ENCODE measurements at regions of chr1 and their contacts with region 1.

Region 1: GRCh38 chr1:161486806-161487741 is 18.2 kb upstream of the FCGR2A start:
- DNase-seq: peak in 7 of 9 donors; percentile 39 to 70 (median 59)
- ATAC-seq: peak; percentile 79
- H3K4me3 ChIP-seq: no peak overlapping the region
- H3K4me3 Mint-ChIP-seq: no peak overlapping the region
- H3K27ac ChIP-seq: no peak overlapping the region
- H3K27ac Mint-ChIP-seq: peak overlapping the region in 1 of 9 donors; percentile 32
- H3K4me1 ChIP-seq: no peaks in the 10 kb centered on the region
- H3K4me1 Mint-ChIP-seq: peaks cover 7 to 20% (median 15%) of the 10 kb centered on the region in 7 donors
- H3K27me3 ChIP-seq: no peaks in the 10 kb centered on the region
- H3K27me3 Mint-ChIP-seq: peaks cover 29 to 51% (median 37%) of the 10 kb centered on the region in 5 donors

Region 2: DNA sequence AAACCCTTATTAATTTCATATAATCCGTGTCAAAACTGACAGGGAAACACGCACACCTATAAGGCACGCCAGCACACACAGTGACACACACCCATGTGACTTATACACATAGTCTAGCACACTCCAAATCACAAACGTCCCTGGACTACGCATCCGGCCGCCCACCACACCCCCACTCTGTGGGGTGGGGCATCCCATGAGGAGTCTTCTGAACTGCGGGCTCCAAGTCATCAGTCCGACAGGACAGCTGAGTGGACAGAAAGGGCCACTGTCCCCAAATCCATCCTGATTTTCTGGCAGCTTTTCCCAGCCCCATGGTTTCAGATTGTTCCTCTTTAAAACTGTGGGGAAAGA is 1281.1 kb before region 1 on chr1:
- CTCF ChIA-PET with region 1: no interaction called
- POLR2A ChIA-PET with region 1: no interaction called
- intact Hi-C with region 1: no loop called
- DNase-seq: peak in 6 of 9 donors; percentile 22 to 58 (median 40)
- ATAC-seq: peak; percentile 61
- H3K4me3 ChIP-seq: peak overlapping the region; percentile 77
- H3K4me3 Mint-ChIP-seq: peak overlapping the region; percentile 77 to 94 (median 86)
- H3K27ac ChIP-seq: peak overlapping the region; percentile 74
- H3K27ac Mint-ChIP-seq: peak overlapping the region; percentile 58 to 88 (median 82)
- H3K4me1 ChIP-seq: peaks cover 12 to 16% of the 10 kb centered on the region in 2 donors
- H3K4me1 Mint-ChIP-seq: peaks cover 31 to 50% (median 37%) of the 10 kb centered on the region in 7 donors
- H3K27me3 ChIP-seq: no peaks in the 10 kb centered on the region
- H3K27me3 Mint-ChIP-seq: no peaks in the 10 kb centered on the region

Region 3: DNA sequence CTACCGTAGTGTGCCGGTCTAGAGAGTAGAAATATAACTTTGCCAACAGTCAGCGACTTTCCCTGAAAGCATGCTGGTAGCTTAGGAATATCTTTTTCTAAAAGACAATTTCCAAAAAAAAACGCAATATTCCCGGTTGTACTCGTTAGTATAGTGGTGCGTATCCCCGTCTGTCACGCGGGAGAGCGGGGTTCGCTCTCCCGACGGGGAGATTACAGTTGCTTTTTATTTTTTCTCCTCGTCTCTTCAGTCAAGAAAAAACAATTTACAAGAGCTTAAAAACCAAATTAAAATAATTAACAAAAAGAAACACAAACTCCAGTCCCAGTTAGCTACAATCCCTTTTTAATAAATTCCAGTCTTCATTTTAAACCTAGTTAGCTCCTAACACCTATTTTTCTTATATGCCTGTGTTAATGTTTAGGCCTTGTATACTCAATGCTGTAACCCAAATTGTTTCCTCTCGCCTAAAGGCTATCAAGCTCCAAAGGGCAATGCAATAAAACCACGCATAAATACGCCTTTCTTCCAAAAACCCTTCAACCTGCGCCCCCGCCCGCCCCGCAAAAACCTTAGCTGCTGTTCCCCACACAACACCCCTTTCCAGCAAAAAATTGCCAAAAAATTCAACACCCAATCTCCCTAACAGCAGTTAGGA is 45.0 kb after region 1 on chr1:
- CTCF ChIA-PET with region 1: no interaction called
- POLR2A ChIA-PET with region 1: no interaction called
- intact Hi-C with region 1: loop called in 1 of 2 experiments (anchors 2 kb)
- DNase-seq: no peak
- ATAC-seq: no peak
- H3K4me3 ChIP-seq: no peak overlapping the region
- H3K4me3 Mint-ChIP-seq: peak overlapping the region in 9 of 10 donors; percentile 25 to 59 (median 50)
- H3K27ac ChIP-seq: no peak overlapping the region
- H3K27ac Mint-ChIP-seq: peak overlapping the region in 6 of 9 donors; percentile 10 to 80 (median 66)
- H3K4me1 ChIP-seq: peaks cover 10 to 11% of the 10 kb centered on the region in 2 donors
- H3K4me1 Mint-ChIP-seq: peaks cover 0 to 23% (median 19%) of the 10 kb centered on the region in 7 donors
- H3K27me3 ChIP-seq: no peaks in the 10 kb centered on the region
- H3K27me3 Mint-ChIP-seq: peaks cover 0 to 34% (median 0%) of the 10 kb centered on the region in 5 donors

Region 4: GRCh38 chr1:161738627-161739287 is 251.7 kb after region 1 on chr1:
- CTCF ChIA-PET with region 1: interaction called, 18 read pairs
- POLR2A ChIA-PET with region 1: no interaction called
- intact Hi-C with region 1: loop called (anchors 1 kb)
- DNase-seq: peak in 8 of 9 donors; percentile 17 to 55 (median 47)
- ATAC-seq: peak; percentile 83
- H3K4me3 ChIP-seq: no peak overlapping the region
- H3K4me3 Mint-ChIP-seq: peak overlapping the region in 1 of 10 donors; percentile 28
- H3K27ac ChIP-seq: no peak overlapping the region
- H3K27ac Mint-ChIP-seq: peak overlapping the region in 1 of 9 donors; percentile 74
- H3K4me1 ChIP-seq: peaks cover 4 to 25% of the 10 kb centered on the region in 2 donors
- H3K4me1 Mint-ChIP-seq: peaks cover 0 to 42% (median 18%) of the 10 kb centered on the region in 7 donors
- H3K27me3 ChIP-seq: no peaks in the 10 kb centered on the region
- H3K27me3 Mint-ChIP-seq: peaks cover 0 to 36% (median 5%) of the 10 kb centered on the region in 5 donors

Region 5: DNA sequence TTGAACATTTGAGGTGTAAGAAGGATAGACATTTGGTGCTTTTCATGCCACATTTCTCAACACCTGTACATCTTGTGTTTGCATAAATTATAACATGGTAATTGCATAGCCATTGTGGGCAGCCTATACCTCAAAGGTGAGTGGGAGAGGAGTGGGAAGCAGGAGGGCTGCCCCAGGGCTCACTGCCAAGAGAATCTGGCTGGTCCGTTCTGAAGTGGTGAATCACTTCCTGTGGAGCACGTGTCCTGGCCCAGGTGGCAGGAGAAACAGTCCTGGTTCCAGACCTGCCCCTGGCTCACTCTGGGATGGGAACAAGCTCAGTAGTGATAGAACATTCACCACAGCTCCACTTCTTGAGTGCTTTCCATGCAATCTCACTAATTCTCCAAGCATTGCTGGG is 548.2 kb after region 1 on chr1:
- CTCF ChIA-PET with region 1: no interaction called
- POLR2A ChIA-PET with region 1: no interaction called
- intact Hi-C with region 1: loop called (anchors 1 to 10 kb)
- DNase-seq: no peak
- ATAC-seq: no peak
- H3K4me3 ChIP-seq: no peak overlapping the region
- H3K4me3 Mint-ChIP-seq: no peak overlapping the region
- H3K27ac ChIP-seq: no peak overlapping the region
- H3K27ac Mint-ChIP-seq: no peak overlapping the region
- H3K4me1 ChIP-seq: no peaks in the 10 kb centered on the region
- H3K4me1 Mint-ChIP-seq: peaks cover 0 to 10% (median 0%) of the 10 kb centered on the region in 7 donors
- H3K27me3 ChIP-seq: no peaks in the 10 kb centered on the region
- H3K27me3 Mint-ChIP-seq: peaks cover under 1 to 25% (median 13%) of the 10 kb centered on the region in 5 donors

Region 6: GRCh38 chr1:162040681-162041080 is 553.6 kb after region 1 on chr1:
- CTCF ChIA-PET with region 1: no interaction called
- POLR2A ChIA-PET with region 1: no interaction called
- intact Hi-C with region 1: loop called (anchors 1 to 10 kb)
- DNase-seq: no peak
- ATAC-seq: no peak
- H3K4me3 ChIP-seq: no peak overlapping the region
- H3K4me3 Mint-ChIP-seq: no peak overlapping the region
- H3K27ac ChIP-seq: no peak overlapping the region
- H3K27ac Mint-ChIP-seq: peak overlapping the region in 1 of 9 donors; percentile 12
- H3K4me1 ChIP-seq: no peaks in the 10 kb centered on the region
- H3K4me1 Mint-ChIP-seq: peaks cover 0 to 4% (median 0%) of the 10 kb centered on the region in 7 donors
- H3K27me3 ChIP-seq: no peaks in the 10 kb centered on the region
- H3K27me3 Mint-ChIP-seq: peaks cover 5 to 20% (median 10%) of the 10 kb centered on the region in 5 donors

Measured in naive thymus-derived CD4-positive, alpha-beta T cell (primary cell).